Sciatic nerve (tissue), 2 donors: ENCODE measurements at regions of chr4 and their contacts with region 1.

Region 1: GRCh38 chr4:34953145-34953799 is 1291.0 kb downstream of the ARAP2 start:
- DNase-seq: no peak
- ATAC-seq: no peak

Region 2: DNA sequence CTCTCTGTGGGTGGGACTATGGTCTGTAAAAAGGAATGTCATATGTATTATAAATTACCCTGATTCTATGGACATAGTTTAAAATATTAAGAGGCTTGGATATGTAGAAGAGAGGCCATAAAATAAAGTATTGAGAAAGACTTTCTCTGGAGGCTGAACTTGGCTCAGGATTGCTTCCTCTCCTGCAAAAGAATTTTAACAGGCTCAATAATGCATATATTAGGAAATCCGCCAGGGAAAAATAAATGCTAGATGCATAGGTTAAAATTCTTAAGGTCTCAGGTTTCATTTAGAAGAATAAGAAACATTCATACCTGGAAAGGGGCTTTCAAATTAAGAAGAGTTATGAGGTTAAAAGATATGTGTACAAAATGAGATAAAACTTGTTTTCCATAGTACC is 866.7 kb after region 1 on chr4:
- intact Hi-C with region 1: loop called (anchors 10 kb)
- DNase-seq: no peak
- ATAC-seq: no peak